ENCODE measurements at regions of chrX and their contacts with region 1.

Region 1: GRCh38 chrX:1323315-1323714 is 13.3 kb upstream of the IL3RA start:
- DNase-seq: peak; percentile 74 to 86 (median 84)
- H3K4me3 ChIP-seq: no peak overlapping the region
- H3K4me3 Mint-ChIP-seq: no peak overlapping the region
- H3K27ac ChIP-seq: no peak overlapping the region
- H3K27ac Mint-ChIP-seq: peak overlapping the region in 6 of 7 donors; percentile 57 to 89 (median 84)
- H3K4me1 ChIP-seq: peaks cover 54% of the 10 kb centered on the region in 2 donors
- H3K4me1 Mint-ChIP-seq: peaks cover 52% of the 10 kb centered on the region
- H3K27me3 ChIP-seq: no peaks in the 10 kb centered on the region
- H3K27me3 Mint-ChIP-seq: peaks cover 0 to 10% (median 0%) of the 10 kb centered on the region in 3 donors
- CTCF ChIP-seq: peak; percentile 68

Region 2: DNA sequence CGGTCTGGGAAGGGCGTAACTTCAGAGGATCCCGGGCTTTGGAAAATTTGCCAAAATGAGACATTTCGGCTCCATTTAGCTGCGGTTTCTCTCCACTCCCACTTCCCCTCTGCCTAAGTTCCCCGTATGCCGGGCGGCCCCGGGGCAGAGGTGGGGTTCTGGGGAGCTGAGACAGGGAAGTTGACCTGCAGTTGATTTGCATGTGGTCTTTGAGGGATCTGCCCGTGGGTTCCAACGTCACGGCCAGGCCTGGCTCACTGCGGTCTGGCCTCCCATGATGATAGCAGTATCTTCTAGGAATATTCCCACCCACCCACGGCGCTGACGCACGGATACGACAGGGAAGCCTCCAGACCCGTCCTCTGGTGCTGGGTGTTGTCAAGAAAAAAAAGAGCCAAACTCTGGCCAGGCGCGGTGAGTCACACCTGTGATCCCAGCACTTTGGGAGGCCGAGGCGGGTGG is 83.6 kb before region 1 on chrX:
- intact Hi-C with region 1: loop called in 1 of 2 experiments (anchors 5 kb)
- DNase-seq: peak; percentile 99 to 100 (median 99)
- H3K4me3 ChIP-seq: peak overlapping the region in 1 of 3 experiments; percentile 2
- H3K4me3 Mint-ChIP-seq: peak overlapping the region; percentile 42 to 54
- H3K27ac ChIP-seq: peak overlapping the region; percentile 59 to 74
- H3K27ac Mint-ChIP-seq: peak overlapping the region; percentile 81 to 96 (median 94)
- H3K4me1 ChIP-seq: peaks cover 22 to 25% of the 10 kb centered on the region in 2 donors
- H3K4me1 Mint-ChIP-seq: peaks cover 23% of the 10 kb centered on the region
- H3K27me3 ChIP-seq: peaks cover 0 to 2% of the 10 kb centered on the region in 2 donors
- H3K27me3 Mint-ChIP-seq: peaks cover 3 to 19% (median 10%) of the 10 kb centered on the region in 3 donors
- CTCF ChIP-seq: no peak

Region 3: GRCh38 chrX:1336331-1336943 is 13.1 kb after region 1 on chrX and contains the start of gene IL3RA:
- intact Hi-C with region 1: loop called in 1 of 2 experiments (anchors 2 kb)
- DNase-seq: peak; percentile 95 to 99 (median 97)
- H3K4me3 ChIP-seq: peak within 1 kb of the TSS; percentile 59 to 78 (median 74)
- H3K4me3 Mint-ChIP-seq: peak within 1 kb of the TSS; percentile 95 to 96
- H3K27ac ChIP-seq: peak within 1 kb of the TSS; percentile 87 to 93
- H3K27ac Mint-ChIP-seq: peak within 1 kb of the TSS; percentile 93 to 100 (median 97)
- H3K4me1 ChIP-seq: peaks cover 61 to 63% of the 10 kb centered on the region in 2 donors
- H3K4me1 Mint-ChIP-seq: peaks cover 58% of the 10 kb centered on the region
- H3K27me3 ChIP-seq: no peaks in the 10 kb centered on the region
- H3K27me3 Mint-ChIP-seq: peaks cover 2 to 22% (median 3%) of the 10 kb centered on the region in 3 donors
- CTCF ChIP-seq: no peak
- polyA plus RNA-seq, gene IL3RA: 2.9 to 12.0 (median 4.4) TPM

Region 4: DNA sequence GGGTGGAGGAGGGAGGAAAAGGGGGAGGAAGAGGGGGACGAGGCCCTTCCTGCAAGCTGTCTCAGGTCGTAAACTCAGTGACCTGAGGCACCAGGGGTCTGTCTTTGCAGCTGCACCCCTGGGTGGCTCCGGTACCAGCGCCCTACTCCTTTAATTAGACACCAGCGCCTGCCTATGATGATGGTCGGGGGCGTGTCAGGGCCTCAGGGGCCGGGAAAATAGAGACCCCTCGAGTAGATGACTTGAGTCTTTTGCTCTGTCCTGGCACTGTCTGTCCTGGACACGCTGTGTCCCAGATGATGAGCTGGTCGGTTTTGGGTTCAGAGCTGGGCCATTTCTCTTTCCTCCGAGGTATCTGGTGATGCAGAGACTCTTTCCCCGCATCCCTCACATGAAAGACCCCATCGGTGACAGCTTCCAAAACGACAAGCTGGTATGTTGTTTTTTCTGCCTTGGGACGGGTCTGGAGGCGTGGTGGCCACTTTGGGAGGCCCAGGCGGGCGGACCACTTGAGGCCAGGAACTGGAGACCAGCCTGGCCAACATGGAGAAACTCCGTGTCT is 57.4 kb after region 1 on chrX:
- intact Hi-C with region 1: loop called in 1 of 2 experiments (anchors 10 kb)
- DNase-seq: no peak
- H3K4me3 ChIP-seq: no peak overlapping the region
- H3K4me3 Mint-ChIP-seq: no peak overlapping the region
- H3K27ac ChIP-seq: no peak overlapping the region
- H3K27ac Mint-ChIP-seq: peak overlapping the region in 2 of 7 donors; percentile 50 to 62
- H3K4me1 ChIP-seq: no peaks in the 10 kb centered on the region
- H3K4me1 Mint-ChIP-seq: peaks cover 11% of the 10 kb centered on the region
- H3K27me3 ChIP-seq: no peaks in the 10 kb centered on the region
- H3K27me3 Mint-ChIP-seq: peaks cover 0 to 3% (median 2%) of the 10 kb centered on the region in 3 donors
- CTCF ChIP-seq: no peak

Region 5: DNA sequence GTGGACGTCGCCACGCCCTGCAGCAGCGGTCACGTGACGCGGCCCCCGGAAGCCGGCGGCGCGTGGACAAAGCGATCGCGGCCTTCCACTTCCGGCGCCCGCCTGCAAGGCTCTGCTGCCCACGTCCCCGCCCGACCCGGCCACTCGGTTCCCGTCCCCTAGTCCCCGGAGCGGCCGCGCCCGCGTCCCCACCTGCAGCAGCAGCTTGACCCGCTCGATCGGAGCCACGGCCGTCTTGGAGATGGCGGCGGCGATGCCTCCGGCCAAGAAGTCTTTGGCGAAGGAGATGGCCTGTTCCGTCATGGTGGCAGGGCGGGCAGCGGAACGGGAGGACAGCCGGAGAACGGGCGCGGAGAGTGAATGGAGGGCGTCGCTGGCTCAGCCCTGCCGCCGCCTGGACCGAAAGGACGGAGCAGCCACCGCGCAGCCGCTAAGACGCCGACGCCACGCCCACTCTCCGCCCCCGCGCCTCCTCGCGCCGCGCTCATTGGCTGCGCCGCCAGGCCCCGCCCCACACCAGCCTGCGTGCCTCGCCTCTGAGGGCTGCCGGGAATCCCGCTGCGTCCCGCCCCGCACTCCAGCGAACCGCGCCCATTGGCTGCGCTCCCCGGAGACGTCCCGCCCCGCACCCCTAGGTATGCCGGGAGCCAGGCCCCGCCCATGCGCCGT is 68.5 kb after region 1 on chrX and contains the start of gene SLC25A6:
- intact Hi-C with region 1: loop called (anchors 10 kb)
- DNase-seq: peak; percentile 97 to 98 (median 98)
- H3K4me3 ChIP-seq: peak within 1 kb of the TSS; percentile 76 to 98 (median 93)
- H3K4me3 Mint-ChIP-seq: peak within 1 kb of the TSS; percentile 89 to 90
- H3K27ac ChIP-seq: peak within 1 kb of the TSS; percentile 95
- H3K27ac Mint-ChIP-seq: peak within 1 kb of the TSS; percentile 93 to 97 (median 96)
- H3K4me1 ChIP-seq: peaks cover 17 to 34% of the 10 kb centered on the region in 2 donors
- H3K4me1 Mint-ChIP-seq: peaks cover 22% of the 10 kb centered on the region
- H3K27me3 ChIP-seq: no peaks in the 10 kb centered on the region
- H3K27me3 Mint-ChIP-seq: peaks cover 0 to 2% (median 0%) of the 10 kb centered on the region in 3 donors
- CTCF ChIP-seq: peak; percentile 30
- polyA plus RNA-seq, gene SLC25A6: 442 to 769 (median 449) TPM